Sigmoid colon (tissue), 7 donors: ENCODE measurements at regions of chr1 and their contacts with region 1.

Region 1: DNA sequence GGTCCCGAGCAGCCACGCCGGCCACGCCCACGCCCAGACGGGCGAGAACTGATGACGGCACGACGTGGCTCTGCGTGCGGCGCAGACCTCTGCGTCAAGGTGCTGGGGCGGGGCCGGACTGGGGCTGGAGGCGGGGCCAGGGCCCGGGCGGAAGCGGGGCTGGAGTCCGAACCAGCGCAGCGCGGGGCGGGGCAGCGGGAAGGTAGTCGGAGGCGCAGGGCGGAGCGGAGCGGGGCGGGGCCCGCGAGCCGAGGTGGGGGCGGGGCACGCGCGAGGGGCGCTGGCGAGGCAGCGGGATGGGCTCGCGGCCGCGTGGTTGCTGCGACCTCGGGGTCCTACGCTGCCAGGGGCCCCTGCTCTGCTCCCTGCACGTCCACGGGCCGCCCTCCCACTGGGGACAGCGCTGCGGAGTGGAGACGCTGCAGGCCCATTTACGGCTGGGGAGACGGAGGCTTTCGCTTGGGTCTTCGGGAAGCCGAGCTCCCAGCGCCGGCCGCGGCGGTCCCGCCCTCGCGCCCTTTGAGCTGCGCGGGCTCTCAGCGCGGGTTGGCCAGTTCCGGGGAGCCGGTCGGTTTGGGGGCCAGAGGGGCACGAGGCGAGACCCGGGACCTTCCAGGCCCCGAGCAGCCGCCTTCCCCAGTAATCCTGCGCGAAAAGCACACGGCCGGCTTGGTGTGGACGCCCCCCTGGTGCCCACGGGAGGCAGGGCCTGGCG is at the start of gene PEX10:
- DNase-seq: peak; percentile 98
- H3K4me3 ChIP-seq: peak within 1 kb of the TSS; percentile 65 to 97 (median 84)
- H3K27ac ChIP-seq: peak within 1 kb of the TSS; percentile 86 to 93 (median 90)
- H3K4me1 ChIP-seq: peaks cover 0 to 31% (median 26%) of the 10 kb centered on the region in 4 donors
- H3K27me3 ChIP-seq: peaks cover 4 to 23% (median 14%) of the 10 kb centered on the region in 3 donors
- CTCF ChIP-seq: no peak
- EP300 ChIP-seq: peak in 1 of 4 donors; percentile 14
- POLR2A ChIP-seq: peak in 1 of 2 donors; percentile 13
- total RNA-seq, gene PEX10: 12.8 to 17.0 (median 15.0) TPM

Region 2: DNA sequence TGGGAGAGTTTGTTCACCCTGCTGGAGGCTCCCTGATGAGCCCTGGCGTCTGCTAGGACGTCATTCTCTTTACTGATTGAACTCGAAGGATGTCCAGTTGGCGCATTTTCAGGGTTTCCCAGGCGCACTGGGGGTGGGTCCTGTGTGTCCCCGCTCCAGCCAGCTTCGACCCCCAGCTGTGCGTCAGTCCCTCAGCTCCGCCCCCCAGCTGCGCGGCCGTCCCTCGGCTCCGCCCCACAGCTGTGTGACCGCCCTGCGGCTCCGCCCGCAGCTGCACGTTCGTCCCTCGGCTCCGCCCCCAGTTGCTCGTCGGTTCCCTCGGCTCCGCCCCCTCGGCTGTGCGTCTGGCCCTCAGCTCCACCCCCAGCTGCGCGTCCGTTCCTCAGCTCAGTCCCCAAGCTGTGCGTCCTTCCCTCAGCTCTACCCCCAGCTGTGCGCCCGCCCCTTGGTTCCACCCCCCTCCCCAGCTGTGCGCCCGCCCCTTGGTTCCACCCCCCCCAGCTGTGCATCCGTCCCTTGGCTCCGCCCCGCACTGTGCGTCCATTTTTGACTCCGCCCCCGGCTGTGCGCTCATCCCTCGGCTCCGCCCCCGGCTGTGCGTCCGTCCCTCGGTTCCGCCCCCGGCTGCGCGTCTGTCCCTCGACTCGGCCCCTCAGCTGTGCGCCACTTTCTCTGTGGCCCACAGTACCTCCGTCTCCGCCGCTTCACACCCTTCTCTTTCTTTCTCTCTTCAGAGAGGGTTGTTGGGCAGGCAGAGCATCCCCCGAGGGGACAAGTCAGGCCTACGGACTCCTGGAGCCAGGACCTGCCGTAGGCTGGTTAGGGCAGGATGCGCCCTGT is 279.4 kb before region 1 on chr1:
- intact Hi-C with region 1: loop called (anchors 5 kb)
- DNase-seq: peak; percentile 100
- H3K4me3 ChIP-seq: peak overlapping the region; percentile 18 to 54 (median 46)
- H3K27ac ChIP-seq: peak overlapping the region; percentile 89 to 93 (median 92)
- H3K4me1 ChIP-seq: peaks cover 0 to 32% (median 27%) of the 10 kb centered on the region in 4 donors
- H3K27me3 ChIP-seq: no peaks in the 10 kb centered on the region
- CTCF ChIP-seq: peak in 1 of 4 experiments; percentile 19
- EP300 ChIP-seq: peak in 2 of 4 donors; percentile 34 to 84
- POLR2A ChIP-seq: peak; percentile 39 to 56

Region 3: GRCh38 chr1:2525920-2526823 is 113.5 kb after region 1 on chr1 and contains the start of gene PANK4:
- intact Hi-C with region 1: loop called (anchors 1 kb)
- DNase-seq: peak; percentile 96
- H3K4me3 ChIP-seq: peak within 1 kb of the TSS; percentile 58 to 96 (median 90)
- H3K27ac ChIP-seq: peak within 1 kb of the TSS; percentile 70 to 83 (median 80)
- H3K4me1 ChIP-seq: peaks cover 0 to 67% (median 65%) of the 10 kb centered on the region in 4 donors
- H3K27me3 ChIP-seq: peaks cover 21 to 35% (median 30%) of the 10 kb centered on the region in 3 donors
- CTCF ChIP-seq: no peak
- EP300 ChIP-seq: no peak
- POLR2A ChIP-seq: peak; percentile 27 to 56
- total RNA-seq, gene PANK4: 23.6 to 37.7 (median 27.9) TPM

Region 4: DNA sequence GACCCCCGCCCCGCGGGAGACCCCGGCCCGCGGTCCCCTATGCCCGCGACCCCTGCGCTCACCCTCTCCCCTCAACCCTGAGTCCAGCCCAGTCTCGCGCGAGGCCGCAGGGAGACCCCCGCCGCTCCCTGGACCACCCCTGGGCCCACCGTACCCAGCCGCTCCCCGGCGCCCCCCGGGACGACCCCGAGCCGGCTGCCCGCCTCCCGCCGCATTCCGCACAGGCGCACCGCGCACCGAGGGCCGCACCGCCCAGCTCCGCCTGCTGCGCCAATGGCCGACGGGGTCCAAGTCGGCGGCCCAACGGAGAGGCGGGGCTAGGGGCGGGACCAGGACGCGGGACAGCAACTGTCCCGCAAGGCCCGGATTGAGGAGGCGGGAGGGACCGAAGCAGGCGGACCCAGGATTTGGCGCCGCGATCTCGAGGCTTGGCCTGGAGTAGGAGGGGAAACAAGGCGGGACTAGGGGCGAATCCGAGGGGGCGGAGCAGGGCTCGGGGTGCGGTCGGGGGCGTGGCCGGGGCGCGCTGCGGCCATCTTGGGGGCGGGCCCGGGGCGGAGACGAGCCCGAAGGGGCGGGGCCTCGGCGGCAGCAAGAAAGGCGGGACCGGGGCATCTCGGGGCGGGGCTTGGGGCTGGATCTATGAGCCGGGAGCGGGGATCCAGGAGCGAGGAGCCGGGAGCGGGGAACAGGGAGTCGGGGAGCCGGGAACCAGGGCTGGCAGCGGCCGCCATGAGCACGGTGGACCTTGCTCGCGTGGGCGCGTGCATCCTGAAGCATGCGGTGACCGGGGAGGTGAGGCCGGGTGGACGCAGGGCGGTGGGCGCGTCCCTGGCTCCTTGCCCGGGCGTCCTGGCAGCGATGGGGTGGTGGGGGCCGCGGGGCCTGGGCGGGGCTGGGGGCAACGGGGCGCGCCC is 173.7 kb after region 1 on chr1 and contains the start of gene PRXL2B:
- intact Hi-C with region 1: loop called (anchors 2 kb)
- DNase-seq: peak; percentile 100
- H3K4me3 ChIP-seq: peak within 1 kb of the TSS; percentile 91 to 96 (median 94)
- H3K27ac ChIP-seq: peak within 1 kb of the TSS; percentile 99 to 100 (median 100)
- H3K4me1 ChIP-seq: peaks cover 0 to 40% (median 33%) of the 10 kb centered on the region in 4 donors
- H3K27me3 ChIP-seq: no peaks in the 10 kb centered on the region
- CTCF ChIP-seq: no peak
- EP300 ChIP-seq: no peak
- POLR2A ChIP-seq: peak in 1 of 2 donors; percentile 50
- total RNA-seq, gene PRXL2B: 8.6 to 18.2 (median 15.3) TPM

Region 5: DNA sequence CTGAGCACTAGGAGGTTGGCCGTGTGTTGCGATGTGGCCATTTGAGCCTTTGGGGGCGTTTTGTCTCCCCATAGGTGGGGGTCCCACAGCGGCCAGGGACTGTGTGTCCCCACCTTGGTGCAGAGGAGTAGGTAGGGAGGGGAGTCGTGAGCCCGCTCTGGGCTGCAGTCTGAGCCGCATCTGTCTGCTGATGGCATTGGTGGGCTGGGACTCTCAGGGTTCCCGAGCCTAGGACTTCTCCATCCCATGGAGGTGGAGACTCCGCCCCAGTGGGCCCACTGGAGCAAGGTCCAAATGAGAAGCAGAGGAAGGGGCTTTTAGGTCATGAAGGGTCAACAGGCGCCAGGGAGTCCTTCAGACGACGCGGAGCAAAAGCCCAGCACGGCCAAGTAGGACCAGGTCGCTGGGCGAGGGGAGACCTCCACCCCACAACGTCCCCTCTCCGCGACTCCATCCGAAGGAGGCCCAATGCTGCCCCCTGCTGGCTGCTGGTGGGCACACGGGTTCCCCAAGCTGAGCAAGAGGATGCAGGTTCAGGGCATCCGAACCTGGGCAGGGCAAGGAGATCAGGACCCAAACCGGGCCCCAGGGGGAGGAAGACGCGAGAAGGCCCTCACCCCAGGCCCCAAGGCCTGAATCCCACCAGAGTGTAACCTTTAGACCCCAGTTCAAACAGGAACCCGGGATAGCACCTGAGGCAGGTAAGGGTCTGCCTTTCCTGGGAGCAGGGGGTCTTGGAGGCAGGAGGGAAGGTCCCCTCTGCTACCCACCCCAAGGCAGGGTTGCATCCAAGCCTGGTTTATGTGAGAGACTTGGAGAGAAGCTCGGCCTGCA is 373.9 kb after region 1 on chr1:
- intact Hi-C with region 1: loop called (anchors 1 kb)
- DNase-seq: peak; percentile 69
- H3K4me3 ChIP-seq: no peak overlapping the region
- H3K27ac ChIP-seq: no peak overlapping the region
- H3K4me1 ChIP-seq: no peaks in the 10 kb centered on the region
- H3K27me3 ChIP-seq: peaks cover 11 to 66% (median 49%) of the 10 kb centered on the region in 3 donors
- CTCF ChIP-seq: peak; percentile 20 to 65 (median 38)
- EP300 ChIP-seq: no peak
- POLR2A ChIP-seq: no peak

Region 6: DNA sequence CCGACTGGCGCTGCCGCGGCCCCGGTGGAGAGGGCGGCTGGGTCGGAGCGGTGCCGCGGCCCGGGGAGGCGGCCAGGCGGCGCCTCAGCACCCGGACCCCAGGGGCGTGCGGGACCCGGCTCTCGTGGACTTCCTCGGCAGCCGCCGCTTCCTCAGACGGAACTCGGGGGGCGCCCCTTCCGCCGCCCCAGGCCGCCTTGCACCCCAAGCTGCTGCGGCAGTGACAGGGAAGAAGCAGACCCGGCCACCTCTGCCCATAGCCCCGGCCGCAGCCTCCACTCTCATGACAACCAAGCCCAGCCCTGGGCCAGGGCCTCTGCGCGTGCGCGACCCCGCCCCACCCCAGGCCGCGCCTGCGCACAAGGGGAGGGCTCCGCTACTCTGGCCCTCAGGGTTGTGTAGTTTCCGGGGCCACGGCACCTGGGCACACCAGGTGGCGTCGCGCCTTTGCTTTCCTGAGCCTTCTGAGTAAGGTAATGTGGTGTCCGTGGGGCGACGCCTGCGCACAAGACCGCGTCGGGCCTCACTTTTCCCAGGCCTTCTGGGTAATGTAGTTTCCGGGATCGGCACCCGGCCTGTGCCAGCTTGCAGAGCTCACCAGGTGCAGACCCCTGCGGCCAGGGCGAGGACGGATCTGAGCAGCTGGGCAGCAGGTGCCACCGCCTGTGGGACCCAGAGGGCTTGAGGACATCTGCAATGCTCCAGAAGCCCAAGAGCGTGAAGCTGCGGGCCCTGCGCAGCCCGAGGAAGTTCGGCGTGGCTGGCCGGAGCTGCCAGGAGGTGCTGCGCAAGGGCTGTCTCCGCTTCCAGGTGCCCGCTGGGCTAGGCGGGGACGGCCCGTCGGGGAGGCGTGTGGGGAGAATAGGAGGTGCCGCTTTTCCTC is 1444.5 kb after region 1 on chr1 and contains the starts of genes CEP104 and DFFB:
- intact Hi-C with region 1: loop called (anchors 5 kb)
- DNase-seq: peak; percentile 90
- H3K4me3 ChIP-seq: peak within 1 kb of the TSS; percentile 68 to 91 (median 84)
- H3K27ac ChIP-seq: peak within 1 kb of the TSS; percentile 78 to 85 (median 82)
- H3K4me1 ChIP-seq: peaks cover 5 to 33% (median 26%) of the 10 kb centered on the region in 4 donors
- H3K27me3 ChIP-seq: no peaks in the 10 kb centered on the region
- CTCF ChIP-seq: no peak
- EP300 ChIP-seq: no peak
- POLR2A ChIP-seq: no peak
- total RNA-seq, gene CEP104: 21.6 to 32.5 (median 25.3) TPM
- total RNA-seq, gene DFFB: 2.9 to 7.4 (median 6.6) TPM